Dendritic cell treated with granulocyte-macrophage colony-stimulating factor and Interleukin-4, amounts not matched to agents 40 ng/mL and 50 ng/mL, for 4 days (primary cell): ENCODE measurements at regions of chr5 and their contacts with region 1.

Region 1: GRCh38 chr5:20498926-20499325 is 510.9 kb upstream of the CDH18 start:
- H3K4me3 Mint-ChIP-seq: no peak overlapping the region
- H3K27ac Mint-ChIP-seq: no peak overlapping the region
- H3K4me1 Mint-ChIP-seq: no peaks in the 10 kb centered on the region
- H3K27me3 Mint-ChIP-seq: no peaks in the 10 kb centered on the region

Region 2: GRCh38 chr5:20514145-20514544 is 15.2 kb after region 1 on chr5:
- intact Hi-C with region 1: loop called (anchors 1 kb)
- H3K4me3 Mint-ChIP-seq: no peak overlapping the region
- H3K27ac Mint-ChIP-seq: no peak overlapping the region
- H3K4me1 Mint-ChIP-seq: no peaks in the 10 kb centered on the region
- H3K27me3 Mint-ChIP-seq: no peaks in the 10 kb centered on the region